OCI-LY7 (cell line): ENCODE measurements at regions of chr3 and their contacts with region 1.

Region 1: GRCh38 chr3:158790901-158791589 is 10.8 kb upstream of the MFSD1 start:
- DNase-seq: peak; percentile 78
- H3K4me3 ChIP-seq: peak overlapping the region; percentile 15
- H3K27ac ChIP-seq: no peak overlapping the region
- H3K4me1 ChIP-seq: no peaks in the 10 kb centered on the region
- CTCF ChIP-seq: peak; percentile 94

Region 2: DNA sequence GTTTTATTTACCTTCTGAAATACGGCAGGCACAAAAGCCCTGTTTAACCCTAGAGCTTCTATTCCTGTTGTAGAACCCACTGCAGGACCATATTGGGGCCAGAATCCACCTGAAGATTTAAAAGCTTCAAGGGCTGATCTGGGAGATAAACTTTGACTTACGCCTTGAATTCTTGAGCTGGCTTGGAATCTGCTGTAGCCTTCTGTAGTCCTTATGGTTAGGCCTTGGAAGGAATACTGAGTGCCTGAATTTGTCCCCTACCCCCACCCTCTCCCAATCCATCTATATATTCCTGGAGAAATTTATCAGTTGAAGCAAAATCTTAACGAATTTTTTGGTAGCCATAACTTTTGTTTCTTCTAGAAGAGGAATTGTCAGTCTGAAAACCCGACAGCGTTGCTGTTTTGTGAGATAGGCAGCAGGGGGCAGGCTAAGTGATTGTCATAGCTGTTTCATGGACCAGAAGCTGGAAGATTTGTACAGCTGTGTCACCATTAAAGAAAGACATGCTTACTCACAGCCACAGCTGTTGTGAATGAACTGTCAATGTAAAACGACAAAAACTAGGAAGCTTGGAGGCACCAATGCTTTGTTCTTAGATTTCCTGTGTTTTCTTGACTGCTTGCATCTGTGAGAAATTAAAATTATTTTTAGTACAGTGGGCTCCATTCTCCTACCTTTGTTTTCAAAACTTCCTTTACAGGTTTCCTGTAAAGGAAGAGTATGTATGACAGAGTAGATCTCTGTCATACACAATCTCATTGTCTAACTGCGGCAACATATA is 131.4 kb before region 1 on chr3:
- CTCF ChIA-PET with region 1: no interaction called
- POLR2A ChIA-PET with region 1: no interaction called
- intact Hi-C with region 1: loop called (anchors 1 kb)
- DNase-seq: peak; percentile 51
- H3K4me3 ChIP-seq: no peak overlapping the region
- H3K27ac ChIP-seq: no peak overlapping the region
- H3K4me1 ChIP-seq: no peaks in the 10 kb centered on the region
- CTCF ChIP-seq: peak; percentile 85

Region 3: GRCh38 chr3:158672293-158673176 is 118.5 kb before region 1 on chr3 and contains the start of gene LXN:
- CTCF ChIA-PET with region 1: no interaction called
- POLR2A ChIA-PET with region 1: no interaction called
- intact Hi-C with region 1: loop called (anchors 5 kb)
- DNase-seq: peak; percentile 82
- H3K4me3 ChIP-seq: peak within 1 kb of the TSS; percentile 75
- H3K27ac ChIP-seq: peak within 1 kb of the TSS; percentile 54
- H3K4me1 ChIP-seq: peaks cover 7% of the 10 kb centered on the region
- CTCF ChIP-seq: peak; percentile 63
- total RNA-seq, gene LXN: 9.0 and 10.9 TPM in 2 replicates

Region 4: GRCh38 chr3:158727206-158728060 is 63.6 kb before region 1 on chr3:
- CTCF ChIA-PET with region 1: interaction called, 7 read pairs
- POLR2A ChIA-PET with region 1: interaction called, 3 read pairs
- intact Hi-C with region 1: loop called (anchors 1 kb)
- DNase-seq: peak; percentile 68
- H3K4me3 ChIP-seq: no peak overlapping the region
- H3K27ac ChIP-seq: no peak overlapping the region
- H3K4me1 ChIP-seq: peaks cover 10% of the 10 kb centered on the region
- CTCF ChIP-seq: peak; percentile 91

Region 5: DNA sequence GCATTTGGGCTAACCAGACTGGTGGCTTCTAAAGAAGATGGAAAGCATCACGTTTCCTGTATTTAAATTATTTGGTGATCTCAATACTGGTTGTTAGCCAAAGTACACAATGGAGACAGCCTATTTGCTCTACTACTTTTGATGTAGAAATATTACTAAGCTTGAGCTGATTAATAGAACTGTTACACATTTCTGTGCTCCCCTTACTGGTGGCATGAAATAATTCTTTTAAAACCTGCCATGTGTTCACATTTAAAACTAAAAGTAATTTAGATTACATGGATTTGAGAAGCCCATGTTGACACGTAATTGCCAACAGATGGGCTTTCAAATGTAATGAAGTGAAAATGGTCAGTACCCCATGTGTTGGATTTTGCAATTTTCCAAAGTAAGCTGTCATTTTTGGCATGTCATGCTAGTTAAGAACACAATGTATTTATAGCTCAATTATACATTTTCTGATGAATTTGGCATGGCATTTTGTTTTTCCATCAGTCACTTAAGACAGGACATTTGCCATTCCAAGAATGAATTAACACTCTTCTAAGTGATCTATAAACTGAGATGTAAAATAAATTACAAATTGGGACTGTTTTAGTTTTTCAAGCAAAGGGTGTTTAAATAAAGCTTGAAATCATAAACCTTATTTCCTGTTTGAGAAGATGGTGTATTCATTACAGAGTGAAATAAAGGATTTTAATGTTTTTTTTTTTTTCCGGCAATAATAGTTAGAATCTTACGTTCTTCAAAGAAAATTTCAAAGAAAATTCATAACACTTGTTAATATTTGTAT is 48.0 kb before region 1 on chr3:
- CTCF ChIA-PET with region 1: no interaction called
- POLR2A ChIA-PET with region 1: no interaction called
- intact Hi-C with region 1: no loop called
- DNase-seq: no peak
- H3K4me3 ChIP-seq: no peak overlapping the region
- H3K27ac ChIP-seq: no peak overlapping the region
- H3K4me1 ChIP-seq: peaks cover 10% of the 10 kb centered on the region
- CTCF ChIP-seq: no peak

Region 6: GRCh38 chr3:158773845-158774830 is 16.9 kb before region 1 on chr3:
- CTCF ChIA-PET with region 1: no interaction called
- POLR2A ChIA-PET with region 1: no interaction called
- intact Hi-C with region 1: no loop called
- DNase-seq: no peak
- H3K4me3 ChIP-seq: no peak overlapping the region
- H3K27ac ChIP-seq: no peak overlapping the region
- H3K4me1 ChIP-seq: no peaks in the 10 kb centered on the region
- CTCF ChIP-seq: peak; percentile 44